Cardiac septum (tissue), 1 donor: ENCODE measurements at regions of chr1 and their contacts with region 1.

Region 1: DNA sequence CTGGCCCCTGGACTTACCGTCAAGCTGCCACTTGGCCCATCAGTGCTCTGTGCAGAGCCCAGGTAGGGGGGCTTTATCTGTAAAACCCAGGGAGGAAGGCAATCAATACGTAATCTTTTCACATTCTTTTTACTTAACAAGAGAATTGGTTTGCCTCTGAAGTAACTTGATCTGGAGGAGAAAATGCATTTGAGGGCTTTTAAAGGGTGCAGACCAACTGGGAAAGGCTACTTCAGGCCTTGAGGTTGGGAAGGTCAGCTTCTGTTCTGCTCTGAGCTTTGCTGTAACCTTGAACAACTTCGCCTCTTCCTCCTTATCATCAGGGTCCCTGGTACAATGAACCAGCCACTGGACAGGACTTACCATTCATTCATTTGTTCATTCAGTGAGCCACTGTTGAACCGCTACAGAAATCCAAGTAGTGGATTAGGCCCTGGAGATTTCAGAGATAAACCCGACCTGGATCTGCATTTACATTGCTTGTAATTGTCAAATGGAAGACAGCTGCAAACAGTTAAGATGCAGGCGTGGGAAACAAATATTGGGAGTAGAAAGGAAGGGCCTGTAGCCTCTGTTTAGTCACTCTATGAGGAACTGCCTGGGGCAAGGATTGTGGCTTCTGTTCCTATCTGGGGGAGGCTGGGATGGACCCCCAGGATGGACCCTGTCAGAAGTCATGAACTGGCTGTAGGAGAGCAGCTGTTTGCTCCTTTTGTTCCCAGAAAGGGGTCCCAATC is 90.9 kb downstream of the MAN1C1 start:
- DNase-seq: peak; percentile 17

Region 2: GRCh38 chr1:25503551-25504426 is 203.7 kb before region 1 on chr1:
- intact Hi-C with region 1: no loop called
- DNase-seq: no peak

Region 3: GRCh38 chr1:25727635-25728330 is 20.3 kb after region 1 on chr1:
- intact Hi-C with region 1: loop called (anchors 2 kb)
- DNase-seq: peak; percentile 89